ENCODE measurements at regions of chr6 and their contacts with region 1.

Region 1: GRCh38 chr6:114282292-114282691 is 60.5 kb downstream of the HS3ST5 start:
- DNase-seq: no peak
- ATAC-seq: no peak
- H3K4me3 ChIP-seq: no peak overlapping the region
- H3K27ac ChIP-seq: no peak overlapping the region
- H3K4me1 ChIP-seq: no peaks in the 10 kb centered on the region
- H3K27me3 ChIP-seq: no peaks in the 10 kb centered on the region
- CTCF ChIP-seq: no peak

Region 2: DNA sequence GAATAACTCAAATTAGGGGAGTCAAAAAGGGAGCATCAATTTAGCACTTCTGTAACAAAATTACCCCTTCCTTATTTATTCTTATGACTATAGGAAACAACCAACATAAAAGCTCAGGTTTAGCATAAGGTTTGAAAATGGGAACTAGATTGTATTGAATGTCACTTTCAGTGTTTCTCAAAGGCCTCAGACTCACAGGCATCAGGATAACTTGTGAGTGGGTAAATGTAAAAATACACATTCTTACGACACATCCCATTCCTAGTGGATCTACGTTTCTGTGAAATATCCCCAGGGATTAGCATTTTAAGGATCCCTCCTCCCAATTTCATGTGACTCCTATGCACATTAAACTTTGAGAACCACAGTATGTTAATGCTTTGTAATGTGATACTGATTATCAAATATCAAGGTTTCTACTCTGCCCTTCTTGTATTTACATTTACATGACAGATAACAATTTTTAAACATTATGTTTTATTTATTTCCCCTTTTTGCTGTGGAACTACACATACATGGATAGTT is 54.3 kb before region 1 on chr6:
- intact Hi-C with region 1: loop called in 1 of 10 experiments (anchors 2 kb)
- DNase-seq: no peak
- ATAC-seq: no peak
- H3K4me3 ChIP-seq: no peak overlapping the region
- H3K27ac ChIP-seq: no peak overlapping the region
- H3K4me1 ChIP-seq: no peaks in the 10 kb centered on the region
- H3K27me3 ChIP-seq: no peaks in the 10 kb centered on the region
- CTCF ChIP-seq: no peak